ENCODE measurements at regions of chr7 and their contacts with region 1.

Region 1: GRCh38 chr7:21883069-21883468 is 62.6 kb downstream of the CDCA7L start:
- DNase-seq: no peak
- ATAC-seq: peak; percentile 45
- H3K4me3 Mint-ChIP-seq: no peak overlapping the region
- H3K27ac Mint-ChIP-seq: no peak overlapping the region
- H3K4me1 Mint-ChIP-seq: peaks cover 16% of the 10 kb centered on the region
- H3K27me3 Mint-ChIP-seq: no peaks in the 10 kb centered on the region
- CTCF ChIP-seq: no peak

Region 2: DNA sequence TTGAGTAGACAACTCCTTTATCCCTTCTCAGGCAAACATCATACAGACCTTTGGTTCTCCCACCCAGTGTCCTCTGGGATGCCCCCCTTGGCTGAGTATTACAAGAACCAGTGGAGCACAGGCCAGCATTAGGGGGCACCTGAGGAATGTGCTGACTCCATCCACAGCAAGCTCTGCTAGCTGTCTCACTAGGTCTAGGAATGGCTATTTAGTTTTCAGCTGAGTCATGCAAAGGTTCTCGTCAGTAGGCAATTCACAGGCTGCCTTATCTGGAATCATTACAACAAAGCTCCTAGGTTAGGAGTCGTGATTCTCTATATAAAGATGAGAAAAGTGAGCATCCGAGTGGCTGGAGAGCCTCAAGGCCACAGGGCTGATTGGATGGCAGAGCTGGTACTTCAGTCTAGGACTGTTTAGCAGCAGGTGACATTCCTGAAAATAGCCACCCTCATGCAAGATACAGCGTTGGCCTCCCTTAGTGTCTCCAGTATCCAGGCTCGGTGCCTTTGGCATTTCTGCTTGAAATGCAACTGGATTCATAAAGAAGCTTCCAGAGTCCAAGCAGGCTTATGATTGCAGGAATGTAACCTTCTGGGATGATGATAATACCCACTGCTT is 13.2 kb before region 1 on chr7:
- CTCF ChIA-PET with region 1: interaction called, 10 read pairs
- POLR2A ChIA-PET with region 1: no interaction called
- DNase-seq: no peak
- ATAC-seq: peak; percentile 45
- H3K4me3 Mint-ChIP-seq: no peak overlapping the region
- H3K27ac Mint-ChIP-seq: peak overlapping the region; percentile 92
- H3K4me1 Mint-ChIP-seq: peaks cover 79% of the 10 kb centered on the region
- H3K27me3 Mint-ChIP-seq: no peaks in the 10 kb centered on the region
- CTCF ChIP-seq: no peak

Measured in WTC11 (cell line).